Activated CD4-positive, alpha-beta memory T cell treated with anti-CD3 and anti-CD28 coated beads for 36 hours (primary cell): ENCODE measurements at regions of chr17 and their contacts with region 1.

Region 1: GRCh38 chr17:56833809-56834379 is at the starts of genes C17orf67 and DGKE:
- DNase-seq: peak; percentile 99
- H3K4me3 Mint-ChIP-seq: peak within 1 kb of the TSS; percentile 92
- H3K27ac Mint-ChIP-seq: peak within 1 kb of the TSS; percentile 85
- H3K4me1 Mint-ChIP-seq: peaks cover 55% of the 10 kb centered on the region
- H3K27me3 Mint-ChIP-seq: no peaks in the 10 kb centered on the region
- total RNA-seq, gene C17orf67: 3.6 to 3.9 TPM
- total RNA-seq, gene DGKE: 23.3 to 25.6 TPM

Region 2: GRCh38 chr17:56786989-56787482 is 46.9 kb before region 1 on chr17:
- CTCF ChIA-PET with region 1: no interaction called
- POLR2A ChIA-PET with region 1: no interaction called
- intact Hi-C with region 1: loop called (anchors 1 kb)
- DNase-seq: peak; percentile 83
- H3K4me3 Mint-ChIP-seq: peak overlapping the region; percentile 33
- H3K27ac Mint-ChIP-seq: peak overlapping the region; percentile 88
- H3K4me1 Mint-ChIP-seq: peaks cover 33% of the 10 kb centered on the region
- H3K27me3 Mint-ChIP-seq: no peaks in the 10 kb centered on the region

Region 3: GRCh38 chr17:56819431-56820145 is 14.3 kb before region 1 on chr17:
- CTCF ChIA-PET with region 1: interaction called, 42 read pairs
- POLR2A ChIA-PET with region 1: interaction called, 5 read pairs
- intact Hi-C with region 1: loop called (anchors 1 kb)
- DNase-seq: peak; percentile 83
- H3K4me3 Mint-ChIP-seq: no peak overlapping the region
- H3K27ac Mint-ChIP-seq: no peak overlapping the region
- H3K4me1 Mint-ChIP-seq: peaks cover 27% of the 10 kb centered on the region
- H3K27me3 Mint-ChIP-seq: no peaks in the 10 kb centered on the region

Region 4: DNA sequence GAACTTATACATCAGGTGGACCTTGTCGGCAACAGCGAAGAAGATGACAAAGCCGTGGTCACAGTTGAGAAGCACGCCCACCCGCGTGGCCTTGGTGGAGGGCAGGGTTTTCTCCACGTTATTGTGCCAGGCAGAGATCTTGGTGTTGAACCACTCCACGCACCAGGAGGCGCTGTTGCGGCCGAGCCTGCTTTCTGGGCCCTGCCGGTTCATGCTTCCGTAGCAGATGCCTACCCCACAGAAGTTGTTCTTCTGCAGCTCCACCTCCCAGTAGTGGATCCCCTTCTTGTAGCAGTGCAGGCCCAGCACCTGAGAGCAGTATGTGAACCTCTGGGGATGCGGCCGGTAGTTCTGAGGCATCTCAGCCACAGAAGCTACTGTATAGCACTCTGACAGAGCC is 57.9 kb after region 1 on chr17:
- CTCF ChIA-PET with region 1: no interaction called
- POLR2A ChIA-PET with region 1: no interaction called
- intact Hi-C with region 1: no loop called
- DNase-seq: peak; percentile 62
- H3K4me3 Mint-ChIP-seq: no peak overlapping the region
- H3K27ac Mint-ChIP-seq: no peak overlapping the region
- H3K4me1 Mint-ChIP-seq: no peaks in the 10 kb centered on the region
- H3K27me3 Mint-ChIP-seq: no peaks in the 10 kb centered on the region

Region 5: GRCh38 chr17:56913864-56914640 is 80.2 kb after region 1 on chr17 and contains the start of gene TRIM25:
- CTCF ChIA-PET with region 1: interaction called, 4 read pairs
- POLR2A ChIA-PET with region 1: interaction called, 7 read pairs
- intact Hi-C with region 1: loop called (anchors 1 kb)
- DNase-seq: peak; percentile 96
- H3K4me3 Mint-ChIP-seq: peak within 1 kb of the TSS; percentile 87
- H3K27ac Mint-ChIP-seq: peak within 1 kb of the TSS; percentile 94
- H3K4me1 Mint-ChIP-seq: peaks cover 55% of the 10 kb centered on the region
- H3K27me3 Mint-ChIP-seq: no peaks in the 10 kb centered on the region
- total RNA-seq, gene TRIM25: 106 to 126 TPM

Region 6: DNA sequence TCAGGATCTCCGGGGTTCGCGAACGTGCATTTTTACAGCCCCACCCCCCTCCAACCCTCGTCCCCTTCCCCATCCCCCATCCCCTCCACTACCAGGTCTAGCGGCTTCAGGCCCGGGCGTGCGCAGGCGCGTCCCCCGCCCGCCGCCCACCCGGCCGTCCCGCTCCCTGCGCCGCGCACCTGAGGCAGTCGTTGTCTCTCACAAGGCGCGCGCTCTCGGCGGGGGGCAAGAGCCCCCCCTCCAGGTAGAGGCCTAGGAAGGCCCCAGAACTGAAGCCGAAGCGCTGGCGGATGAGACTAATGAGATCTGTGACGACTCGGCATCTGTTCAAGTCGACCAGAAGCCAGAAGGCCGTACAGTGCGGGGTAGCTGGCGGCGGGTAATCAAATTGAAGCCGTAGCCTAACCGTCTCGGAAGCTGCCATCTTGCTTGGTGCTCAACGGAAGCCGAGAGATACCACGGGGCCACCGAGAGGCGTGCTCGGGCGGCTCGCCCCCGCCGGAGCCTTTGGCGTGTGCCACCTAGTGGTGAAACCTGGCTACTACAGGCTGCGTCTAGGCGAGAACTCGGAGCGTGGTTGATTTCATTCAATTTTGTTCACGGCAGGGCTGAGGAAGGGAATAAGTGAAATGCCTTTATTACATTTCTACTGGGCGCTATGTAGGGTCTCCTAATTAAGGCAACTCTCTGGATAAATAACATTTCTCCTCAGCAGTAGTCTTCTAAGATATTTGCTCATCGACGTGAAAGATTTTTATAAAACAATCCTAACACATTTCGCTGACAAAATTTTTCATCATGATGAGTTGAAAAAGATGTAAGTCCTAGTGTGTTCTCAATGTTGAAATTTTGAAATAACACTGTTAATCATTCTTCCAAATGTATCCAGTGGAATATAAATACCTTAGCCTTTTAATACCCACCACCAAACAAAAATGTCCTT is 127.0 kb after region 1 on chr17 and contains the start of gene COIL:
- CTCF ChIA-PET with region 1: interaction called, 3 read pairs
- POLR2A ChIA-PET with region 1: interaction called, 4 read pairs
- intact Hi-C with region 1: loop called (anchors 5 kb)
- DNase-seq: peak; percentile 95
- H3K4me3 Mint-ChIP-seq: peak within 1 kb of the TSS; percentile 80
- H3K27ac Mint-ChIP-seq: peak within 1 kb of the TSS; percentile 85
- H3K4me1 Mint-ChIP-seq: peaks cover 26% of the 10 kb centered on the region
- H3K27me3 Mint-ChIP-seq: no peaks in the 10 kb centered on the region
- total RNA-seq, gene COIL: 16.9 TPM

Region 7: DNA sequence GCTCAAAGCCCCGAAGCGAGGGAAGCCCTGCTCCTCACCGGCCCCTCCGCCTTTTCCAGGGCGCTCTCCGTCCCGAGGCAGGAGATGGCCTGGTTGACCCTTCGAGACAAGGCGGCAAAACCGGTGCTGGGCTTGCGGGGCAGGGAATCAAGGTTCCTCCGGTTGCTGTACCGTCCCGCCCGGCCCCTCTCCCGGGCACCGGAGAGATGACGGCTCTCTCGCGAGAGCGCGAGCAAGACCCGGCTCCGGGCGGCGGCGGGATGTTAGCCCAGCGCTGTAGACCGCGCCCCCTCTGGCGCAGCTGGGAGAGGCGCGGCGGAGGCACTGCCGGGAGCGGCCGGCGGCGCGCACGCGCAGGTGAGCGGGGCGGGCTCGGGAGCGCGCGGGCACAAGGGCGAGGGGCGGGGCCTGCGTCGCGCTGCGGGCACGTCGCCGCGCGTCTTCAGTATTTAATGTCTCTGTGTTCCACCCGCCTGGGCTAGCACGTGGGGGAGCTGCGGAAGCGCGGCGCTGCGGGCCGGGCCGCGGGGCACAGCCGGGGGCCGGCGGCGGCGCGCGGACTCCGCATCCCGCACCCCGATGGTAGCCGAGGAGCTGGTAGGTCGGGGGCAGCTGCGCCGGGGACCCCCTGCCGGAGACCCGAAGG is 251.0 kb after region 1 on chr17 and contains the start of gene AKAP1:
- CTCF ChIA-PET with region 1: no interaction called
- POLR2A ChIA-PET with region 1: interaction called, 3 read pairs
- intact Hi-C with region 1: loop called (anchors 1 kb)
- DNase-seq: peak; percentile 96
- H3K4me3 Mint-ChIP-seq: peak within 1 kb of the TSS; percentile 82
- H3K27ac Mint-ChIP-seq: peak within 1 kb of the TSS; percentile 84
- H3K4me1 Mint-ChIP-seq: peaks cover 38% of the 10 kb centered on the region
- H3K27me3 Mint-ChIP-seq: no peaks in the 10 kb centered on the region
- total RNA-seq, gene AKAP1: 24.5 to 30.8 TPM